Activated CD8-positive, alpha-beta T cell treated with anti-CD3 and anti-CD28 coated beads for 36 hours (primary cell): ENCODE measurements at regions of chr19 and their contacts with region 1.

Region 1: GRCh38 chr19:13093407-13094105 is 9.1 kb downstream of the LYL1 start:
- DNase-seq: peak; percentile 91
- ATAC-seq: peak; percentile 84
- H3K4me3 Mint-ChIP-seq: no peak overlapping the region
- H3K27ac Mint-ChIP-seq: no peak overlapping the region
- H3K4me1 Mint-ChIP-seq: peaks cover 24% of the 10 kb centered on the region
- H3K27me3 Mint-ChIP-seq: peaks cover 26% of the 10 kb centered on the region
- CTCF ChIP-seq: peak; percentile 93

Region 2: GRCh38 chr19:12974301-12975220 is 119.0 kb before region 1 on chr19:
- CTCF ChIA-PET with region 1: interaction called, 116 read pairs
- POLR2A ChIA-PET with region 1: interaction called, 4 read pairs
- intact Hi-C with region 1: no loop called
- DNase-seq: no peak
- ATAC-seq: no peak
- H3K4me3 Mint-ChIP-seq: no peak overlapping the region
- H3K27ac Mint-ChIP-seq: no peak overlapping the region
- H3K4me1 Mint-ChIP-seq: peaks cover 4% of the 10 kb centered on the region
- H3K27me3 Mint-ChIP-seq: peaks cover 10% of the 10 kb centered on the region
- CTCF ChIP-seq: no peak

Region 3: GRCh38 chr19:12983542-12984142 is 109.9 kb before region 1 on chr19:
- CTCF ChIA-PET with region 1: interaction called, 116 read pairs
- POLR2A ChIA-PET with region 1: interaction called, 4 read pairs
- intact Hi-C with region 1: loop called (anchors 2 kb)
- DNase-seq: peak; percentile 85
- ATAC-seq: peak; percentile 89
- H3K4me3 Mint-ChIP-seq: no peak overlapping the region
- H3K27ac Mint-ChIP-seq: no peak overlapping the region
- H3K4me1 Mint-ChIP-seq: peaks cover 2% of the 10 kb centered on the region
- H3K27me3 Mint-ChIP-seq: peaks cover 4% of the 10 kb centered on the region
- CTCF ChIP-seq: peak; percentile 97

Region 4: GRCh38 chr19:13012690-13013608 is 80.6 kb before region 1 on chr19:
- CTCF ChIA-PET with region 1: interaction called, 24 read pairs
- POLR2A ChIA-PET with region 1: no interaction called
- intact Hi-C with region 1: no loop called
- DNase-seq: peak; percentile 70
- ATAC-seq: peak; percentile 62
- H3K4me3 Mint-ChIP-seq: peak overlapping the region; percentile 77
- H3K27ac Mint-ChIP-seq: peak overlapping the region; percentile 75
- H3K4me1 Mint-ChIP-seq: peaks cover 19% of the 10 kb centered on the region
- H3K27me3 Mint-ChIP-seq: peaks cover 59% of the 10 kb centered on the region
- CTCF ChIP-seq: no peak

Region 5: DNA sequence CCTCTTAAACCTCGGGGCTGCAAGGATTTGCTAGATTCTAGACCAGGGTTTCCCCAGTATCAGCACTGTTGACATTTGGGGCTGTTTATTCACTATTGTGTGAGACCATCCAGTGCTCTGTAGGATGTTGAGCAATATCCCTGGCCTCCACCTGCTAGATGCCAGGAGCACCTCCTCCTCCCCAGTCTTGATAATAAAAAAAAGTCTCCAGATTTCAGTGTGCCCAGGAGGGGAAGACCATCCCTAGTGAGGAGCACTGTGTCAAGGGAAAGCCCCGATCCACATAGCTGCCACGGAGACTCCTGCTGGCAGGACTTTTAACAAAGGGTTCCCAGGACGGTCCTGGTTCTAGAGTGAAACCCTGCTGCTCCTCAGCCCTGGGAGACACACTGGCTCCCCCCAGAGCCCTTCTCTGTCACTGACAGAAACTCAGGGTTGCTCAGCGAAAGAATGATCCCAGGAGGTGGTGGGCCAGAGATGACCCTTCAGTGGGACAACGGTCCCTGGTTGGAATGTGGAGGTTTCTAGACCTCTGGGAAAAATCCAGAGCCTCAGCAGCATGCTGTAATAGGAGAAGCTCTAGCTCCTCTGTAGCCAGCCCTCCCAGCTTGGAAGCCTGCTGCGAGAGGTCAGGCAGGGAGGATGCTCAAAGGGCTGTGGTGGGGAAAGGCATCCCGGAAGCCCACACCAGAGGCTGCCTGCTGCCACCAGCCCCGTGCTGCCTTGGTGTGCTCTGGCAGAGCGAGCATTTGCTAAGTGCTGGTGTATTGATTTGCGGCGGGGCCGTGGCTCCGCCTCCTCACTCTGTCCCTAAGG is 11.2 kb before region 1 on chr19:
- CTCF ChIA-PET with region 1: interaction called, 13 read pairs
- POLR2A ChIA-PET with region 1: no interaction called
- intact Hi-C with region 1: no loop called
- DNase-seq: no peak
- ATAC-seq: no peak
- H3K4me3 Mint-ChIP-seq: no peak overlapping the region
- H3K27ac Mint-ChIP-seq: no peak overlapping the region
- H3K4me1 Mint-ChIP-seq: no peaks in the 10 kb centered on the region
- H3K27me3 Mint-ChIP-seq: no peaks in the 10 kb centered on the region
- CTCF ChIP-seq: no peak

Region 6: GRCh38 chr19:13104360-13104847 is 10.8 kb after region 1 on chr19:
- CTCF ChIA-PET with region 1: interaction called, 30 read pairs
- POLR2A ChIA-PET with region 1: no interaction called
- intact Hi-C with region 1: no loop called
- DNase-seq: peak; percentile 74
- ATAC-seq: peak; percentile 63
- H3K4me3 Mint-ChIP-seq: peak overlapping the region; percentile 80
- H3K27ac Mint-ChIP-seq: peak overlapping the region; percentile 86
- H3K4me1 Mint-ChIP-seq: peaks cover 28% of the 10 kb centered on the region
- H3K27me3 Mint-ChIP-seq: no peaks in the 10 kb centered on the region
- CTCF ChIP-seq: peak; percentile 98